K562 (cell line): ENCODE measurements at regions of chr17 and their contacts with region 1.

Region 1: DNA sequence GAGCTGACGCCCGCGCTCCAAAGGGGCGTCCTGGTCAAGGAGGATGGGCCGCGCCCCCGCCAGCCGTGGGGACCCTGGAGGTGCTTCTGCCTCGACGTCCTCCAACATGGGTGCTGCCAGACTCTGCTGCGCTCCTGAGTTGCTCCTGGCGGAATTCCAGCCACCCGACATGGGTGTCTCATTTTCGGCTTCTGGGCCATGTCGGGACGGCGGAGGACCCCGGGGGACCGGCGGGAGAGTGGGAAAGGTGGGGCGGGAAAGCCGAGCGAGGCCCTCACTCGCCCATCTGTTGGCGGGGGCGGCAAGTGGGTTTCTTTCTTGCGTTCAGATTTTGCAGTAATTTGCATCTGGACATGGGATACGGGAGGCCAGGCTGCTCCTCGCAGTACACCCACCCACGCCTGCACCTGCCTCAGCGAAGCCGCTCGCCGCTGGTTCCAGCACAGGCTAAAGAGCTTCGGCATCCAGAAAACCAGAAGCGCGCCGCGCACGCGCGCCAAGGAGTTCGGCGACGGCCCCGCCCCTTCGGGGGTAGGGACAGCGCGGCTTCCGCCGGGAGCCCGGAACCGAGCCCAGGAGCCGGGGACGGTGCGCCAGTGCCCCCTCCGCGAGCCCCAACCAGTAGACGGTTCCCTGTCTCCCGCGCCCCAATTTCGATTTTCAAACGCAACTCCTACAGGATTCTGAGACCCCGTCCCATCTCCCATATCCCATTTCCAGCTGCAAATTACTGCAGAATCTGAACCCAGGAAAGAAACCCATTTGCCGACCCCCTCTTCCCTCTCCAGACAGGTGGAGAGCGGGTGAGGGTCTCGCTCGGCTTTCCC is at the start of gene ARMC7:
- DNase-seq: peak; percentile 96 to 97 (median 96)
- ATAC-seq: peak; percentile 90
- H3K4me3 ChIP-seq: peak within 1 kb of the TSS; percentile 71
- H3K27ac ChIP-seq: peak within 1 kb of the TSS; percentile 83
- H3K4me1 ChIP-seq: peaks cover 8 to 33% of the 10 kb centered on the region in 2 experiments
- H3K27me3 ChIP-seq: no peaks in the 10 kb centered on the region
- CTCF ChIP-seq: peak in 1 of 3 experiments; percentile 24; a peak in 1 of 6 replicates
- EP300 ChIP-seq: no peak
- POLR2A ChIP-seq: peak; percentile 79
- RAD21 ChIP-seq: peak in 1 of 2 experiments; percentile 44; a peak in 3 of 4 replicates
- polyA plus RNA-seq, gene ARMC7: 1.4 to 2.8 TPM

Region 2: DNA sequence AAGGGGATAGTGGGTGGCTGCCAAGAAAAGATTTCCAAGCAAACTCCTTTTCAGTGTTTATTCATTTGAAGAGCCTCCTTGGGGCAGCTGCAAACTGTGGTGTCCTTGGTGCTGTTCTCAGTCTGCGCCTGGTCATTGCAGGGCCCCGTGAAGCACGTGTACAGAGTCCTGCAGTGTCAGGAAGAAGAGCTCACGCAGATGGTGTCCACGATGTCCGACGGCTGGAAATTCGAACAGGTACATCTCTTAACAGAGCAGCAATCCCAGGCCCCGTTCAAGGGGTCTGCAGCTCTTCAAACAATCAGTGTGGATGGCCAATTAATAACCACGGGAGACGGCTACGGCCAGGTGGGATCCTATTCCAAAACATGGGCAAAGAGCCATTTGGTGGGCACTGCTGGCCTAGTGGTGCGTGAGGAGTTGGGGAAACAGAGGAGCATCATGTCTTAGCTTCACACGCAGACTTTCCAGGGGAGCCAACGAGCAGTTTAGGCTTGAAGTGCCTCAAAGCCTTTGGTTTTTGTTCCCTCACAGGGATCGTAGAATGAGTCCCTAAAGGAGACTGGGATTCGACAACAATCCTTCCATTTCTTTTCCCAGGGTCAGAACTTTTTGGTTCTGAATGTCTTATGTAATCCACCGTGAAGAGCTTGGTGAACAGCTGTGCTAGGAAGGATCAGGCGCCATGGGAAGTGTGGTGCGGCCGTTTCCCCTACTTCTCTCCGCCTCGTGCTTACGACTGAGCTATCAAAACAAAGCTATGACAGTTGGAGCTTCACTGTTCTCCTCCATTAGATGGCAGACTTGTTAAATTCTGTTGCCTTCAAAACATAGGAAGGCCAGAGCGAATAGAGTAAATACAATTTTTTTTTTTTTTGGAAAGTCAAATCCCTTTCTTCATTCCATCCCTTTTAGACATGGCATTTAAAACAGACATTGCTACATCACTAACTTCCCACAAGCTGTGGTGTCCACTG is 50.0 kb before region 1 on chr17:
- CTCF ChIA-PET with region 1: interaction called, 12 read pairs
- POLR2A ChIA-PET with region 1: interaction called, 5 read pairs
- in situ Hi-C with region 1: loop called (anchors 5 kb)
- intact Hi-C with region 1: loop called (anchors 5 kb)
- DNase-seq: peak in 2 of 4 experiments; percentile 17 to 60
- ATAC-seq: peak; percentile 89
- H3K4me3 ChIP-seq: no peak overlapping the region
- H3K27ac ChIP-seq: peak overlapping the region; percentile 53; the same call in 2 of the 3 replicates
- H3K4me1 ChIP-seq: peaks cover 0 to 3% of the 10 kb centered on the region in 2 experiments; a peak in 2 of 5 replicates
- H3K27me3 ChIP-seq: no peaks in the 10 kb centered on the region
- CTCF ChIP-seq: peak; percentile 46 to 72 (median 57); a peak in 5 of 6 replicates
- EP300 ChIP-seq: no peak
- POLR2A ChIP-seq: no peak
- RAD21 ChIP-seq: peak; percentile 63 to 83

Region 3: DNA sequence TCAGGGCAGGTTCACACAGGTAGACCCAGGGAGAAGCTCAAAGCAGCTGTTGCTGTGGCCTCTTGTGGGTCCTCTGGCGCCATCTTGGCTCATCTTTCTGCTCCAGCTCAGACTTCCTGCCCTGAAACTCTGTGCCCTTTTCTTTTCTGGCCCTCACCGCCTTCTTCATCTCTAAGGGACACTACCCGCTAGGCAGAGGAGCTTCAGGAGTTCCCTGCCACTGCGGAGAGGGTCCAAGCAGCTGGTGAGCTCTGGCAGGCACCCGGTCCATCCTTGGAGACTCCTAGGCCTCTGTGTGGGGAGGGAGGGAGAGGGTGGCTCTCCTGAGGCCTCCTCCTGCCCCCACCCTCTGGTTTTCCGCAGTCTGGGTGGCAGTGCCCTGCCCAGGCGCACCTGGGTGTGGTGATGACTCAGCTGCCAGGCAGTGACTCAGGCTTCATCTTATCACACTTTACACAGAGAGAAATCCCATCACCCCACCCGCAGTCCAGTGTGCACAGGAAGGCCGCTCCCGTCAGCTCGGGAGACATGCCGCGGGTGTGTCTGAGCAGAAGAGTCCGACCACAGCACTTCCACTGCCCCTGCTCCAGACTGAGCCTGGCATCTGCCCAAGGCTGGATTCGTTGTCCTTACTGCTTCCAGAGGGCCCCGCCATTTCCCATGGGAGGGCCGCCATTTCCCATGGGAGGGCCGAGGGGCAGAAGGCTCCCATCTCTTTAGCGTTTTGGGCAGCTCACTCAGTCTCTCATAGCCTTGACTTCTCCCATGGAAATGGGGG is 14.6 kb after region 1 on chr17:
- CTCF ChIA-PET with region 1: no interaction called
- POLR2A ChIA-PET with region 1: interaction called, 38 read pairs
- in situ Hi-C with region 1: no loop called
- intact Hi-C with region 1: no loop called
- DNase-seq: peak; percentile 67 to 91 (median 76)
- ATAC-seq: peak; percentile 92
- H3K4me3 ChIP-seq: no peak overlapping the region
- H3K27ac ChIP-seq: peak overlapping the region; percentile 85
- H3K4me1 ChIP-seq: peaks cover 24 to 28% of the 10 kb centered on the region in 2 experiments
- H3K27me3 ChIP-seq: no peaks in the 10 kb centered on the region
- CTCF ChIP-seq: no peak
- EP300 ChIP-seq: peak; percentile 88
- POLR2A ChIP-seq: peak; percentile 63
- RAD21 ChIP-seq: peak in 1 of 2 experiments; percentile 16; a peak in 1 of 4 replicates

Region 4: DNA sequence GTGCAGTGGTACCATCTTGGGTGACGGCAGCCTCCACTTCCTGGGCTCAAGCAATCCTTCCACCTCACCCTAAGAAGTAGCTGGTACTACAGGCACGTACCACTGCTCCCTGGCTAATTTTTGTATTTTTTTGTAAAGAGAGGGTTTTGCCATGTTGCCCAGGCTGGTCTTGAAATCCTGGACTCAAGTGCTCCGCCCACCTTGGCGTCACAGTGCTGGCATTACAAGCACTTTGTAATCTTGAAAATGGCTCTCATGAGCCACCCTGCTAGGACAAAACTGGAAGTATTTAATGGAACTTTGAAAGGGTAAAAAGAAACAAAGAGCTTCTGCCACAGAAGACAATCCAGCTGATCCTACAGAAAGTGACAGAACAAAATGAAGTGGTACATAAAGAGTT is 63.9 kb after region 1 on chr17:
- CTCF ChIA-PET with region 1: interaction called, 13 read pairs
- POLR2A ChIA-PET with region 1: interaction called, 9 read pairs
- in situ Hi-C with region 1: no loop called
- intact Hi-C with region 1: loop called (anchors 1 kb)
- DNase-seq: no peak
- ATAC-seq: no peak
- H3K4me3 ChIP-seq: no peak overlapping the region
- H3K27ac ChIP-seq: no peak overlapping the region
- H3K4me1 ChIP-seq: no peaks in the 10 kb centered on the region; a peak in 1 of 5 replicates
- H3K27me3 ChIP-seq: no peaks in the 10 kb centered on the region
- CTCF ChIP-seq: no peak
- EP300 ChIP-seq: no peak
- POLR2A ChIP-seq: no peak
- RAD21 ChIP-seq: no peak

Region 5: GRCh38 chr17:75238684-75239191 is 129.1 kb after region 1 on chr17:
- CTCF ChIA-PET with region 1: no interaction called
- POLR2A ChIA-PET with region 1: interaction called, 4 read pairs
- in situ Hi-C with region 1: no loop called
- intact Hi-C with region 1: loop called (anchors 5 kb)
- DNase-seq: peak; percentile 69 to 80 (median 76)
- ATAC-seq: peak; percentile 81
- H3K4me3 ChIP-seq: no peak overlapping the region
- H3K27ac ChIP-seq: no peak overlapping the region
- H3K4me1 ChIP-seq: peaks cover 14 to 33% of the 10 kb centered on the region in 2 experiments
- H3K27me3 ChIP-seq: no peaks in the 10 kb centered on the region
- CTCF ChIP-seq: peak; percentile 88 to 94 (median 88)
- EP300 ChIP-seq: no peak
- POLR2A ChIP-seq: peak; percentile 58
- RAD21 ChIP-seq: peak; percentile 41 to 78